AG04449 (cell line): ENCODE measurements at regions of chr17 and their contacts with region 1.

Region 1: DNA sequence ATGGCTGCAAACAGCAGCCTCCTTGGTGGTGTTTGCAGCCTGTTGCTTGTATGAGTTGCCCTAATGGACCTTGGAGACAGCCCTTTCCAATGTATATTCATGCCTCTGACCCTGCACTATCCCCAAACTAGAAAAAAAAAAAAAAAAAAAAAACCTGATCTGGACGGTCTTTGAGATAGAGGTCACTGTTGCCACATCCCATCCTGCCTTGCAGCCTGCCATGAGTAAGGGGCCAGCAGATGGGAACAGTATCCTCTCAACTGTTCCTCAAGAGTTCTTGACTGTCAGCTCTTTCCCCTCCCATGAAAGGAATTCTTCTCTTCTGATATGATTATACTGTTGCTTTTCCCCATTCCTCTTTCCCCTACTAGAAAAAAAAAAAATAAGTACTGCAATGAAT is 152.4 kb downstream of the SSH2 start:
- DNase-seq: no peak
- H3K4me3 ChIP-seq: no peak overlapping the region
- CTCF ChIP-seq: no peak

Region 2: DNA sequence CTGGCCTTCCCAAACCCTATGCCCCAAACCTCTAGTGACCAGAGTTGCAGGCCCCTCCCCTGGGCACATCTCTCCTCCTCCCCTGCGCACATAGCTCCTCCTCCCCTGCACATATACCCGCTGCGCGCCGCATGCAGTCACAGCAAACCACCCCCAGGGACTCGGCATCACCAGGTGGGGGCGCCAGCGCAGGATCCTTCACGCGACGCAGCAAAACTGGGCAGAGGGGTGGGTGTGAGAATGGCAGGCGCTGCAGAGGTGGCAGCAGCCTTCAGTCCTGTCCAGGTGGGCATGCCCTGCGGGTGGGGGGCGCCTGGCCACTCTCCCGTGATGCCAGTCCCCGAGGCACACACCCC is 160.6 kb before region 1 on chr17:
- CTCF ChIA-PET with region 1: interaction called, 107 read pairs
- POLR2A ChIA-PET with region 1: no interaction called
- DNase-seq: no peak
- H3K4me3 ChIP-seq: peak overlapping the region; percentile 12; the same call in 1 of the 2 replicates
- CTCF ChIP-seq: peak; percentile 87

Region 3: GRCh38 chr17:29640413-29640812 is 137.2 kb before region 1 on chr17:
- CTCF ChIA-PET with region 1: interaction called, 170 read pairs
- POLR2A ChIA-PET with region 1: no interaction called
- DNase-seq: peak; percentile 57
- H3K4me3 ChIP-seq: no peak overlapping the region
- CTCF ChIP-seq: no peak

Region 4: GRCh38 chr17:29760761-29761696 is 16.6 kb before region 1 on chr17:
- CTCF ChIA-PET with region 1: interaction called, 51 read pairs
- POLR2A ChIA-PET with region 1: no interaction called
- DNase-seq: no peak
- H3K4me3 ChIP-seq: peak overlapping the region; percentile 72
- CTCF ChIP-seq: no peak

Region 5: GRCh38 chr17:29802246-29802645 is 24.6 kb after region 1 on chr17:
- CTCF ChIA-PET with region 1: interaction called, 38 read pairs
- POLR2A ChIA-PET with region 1: no interaction called
- DNase-seq: no peak
- H3K4me3 ChIP-seq: no peak overlapping the region
- CTCF ChIP-seq: no peak